ENCODE measurements at regions of chr4 and their contacts with region 1.

Region 1: DNA sequence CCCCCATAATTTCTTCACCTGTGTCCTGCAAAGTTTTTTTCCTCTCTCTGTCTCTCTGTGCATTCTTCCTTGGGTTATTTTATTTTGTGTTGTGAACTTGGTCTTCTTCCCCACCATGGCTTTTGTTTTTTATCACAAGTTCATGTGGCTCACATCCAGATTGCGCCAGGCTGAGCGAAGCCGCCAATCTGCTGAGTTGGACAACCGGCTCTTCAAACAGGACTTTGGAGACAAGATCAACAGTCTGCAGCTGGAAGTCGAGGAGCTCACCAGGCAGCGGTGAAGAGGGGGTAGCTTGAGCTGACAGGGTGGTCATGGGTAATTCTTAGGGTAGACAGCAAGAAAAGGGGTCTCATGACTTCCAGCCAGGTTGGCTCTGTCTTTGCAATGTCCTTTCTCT is 46.1 kb downstream of the GRSF1 start:
- DNase-seq: no peak
- H3K4me3 ChIP-seq: no peak overlapping the region
- H3K27ac ChIP-seq: no peak overlapping the region
- H3K4me1 ChIP-seq: no peaks in the 10 kb centered on the region
- H3K27me3 ChIP-seq: no peaks in the 10 kb centered on the region
- CTCF ChIP-seq: no peak
- EP300 ChIP-seq: no peak
- POLR2A ChIP-seq: no peak

Region 2: DNA sequence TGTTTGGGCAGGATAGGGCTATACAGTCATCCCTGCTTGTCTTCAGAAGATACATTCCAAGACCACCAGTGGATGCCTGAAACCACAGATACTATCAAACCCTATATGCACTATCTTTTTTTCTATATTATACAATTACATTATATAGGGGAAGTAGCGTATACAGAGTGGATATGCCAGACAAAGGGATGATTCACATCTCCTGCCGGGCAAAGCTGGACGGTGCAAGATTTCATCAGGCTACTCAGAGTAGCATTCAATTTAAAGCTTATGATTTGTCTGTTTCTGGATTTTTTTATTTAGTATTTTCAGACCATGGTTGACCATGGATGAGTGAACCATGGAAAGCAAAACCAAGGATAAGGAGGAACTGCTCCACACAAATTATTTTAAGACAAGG is 282.3 kb before region 1 on chr4:
- intact Hi-C with region 1: loop called in 1 of 4 experiments (anchors 5 kb)
- DNase-seq: no peak
- H3K4me3 ChIP-seq: no peak overlapping the region
- H3K27ac ChIP-seq: no peak overlapping the region
- H3K4me1 ChIP-seq: no peaks in the 10 kb centered on the region
- H3K27me3 ChIP-seq: no peaks in the 10 kb centered on the region
- CTCF ChIP-seq: no peak
- EP300 ChIP-seq: no peak
- POLR2A ChIP-seq: no peak

Region 3: GRCh38 chr4:70624226-70624793 is 169.3 kb before region 1 on chr4:
- intact Hi-C with region 1: no loop called
- DNase-seq: no peak
- H3K4me3 ChIP-seq: no peak overlapping the region
- H3K27ac ChIP-seq: no peak overlapping the region
- H3K4me1 ChIP-seq: no peaks in the 10 kb centered on the region
- H3K27me3 ChIP-seq: no peaks in the 10 kb centered on the region
- CTCF ChIP-seq: no peak
- EP300 ChIP-seq: no peak
- POLR2A ChIP-seq: no peak

Region 4: GRCh38 chr4:70678383-70678999 is 115.1 kb before region 1 on chr4:
- intact Hi-C with region 1: no loop called
- DNase-seq: no peak
- H3K4me3 ChIP-seq: no peak overlapping the region
- H3K27ac ChIP-seq: no peak overlapping the region
- H3K4me1 ChIP-seq: no peaks in the 10 kb centered on the region
- H3K27me3 ChIP-seq: no peaks in the 10 kb centered on the region
- CTCF ChIP-seq: no peak
- EP300 ChIP-seq: no peak
- POLR2A ChIP-seq: no peak

Measured in ovary (tissue), 10 donors.